Activated CD4-positive, alpha-beta T cell treated with anti-CD3 and anti-CD28 coated beads, Interleukin-2, amount 10 ng/mL, durations not matched to agents 24 days and 14 days (primary cell): ENCODE measurements at regions of chr20 and their contacts with region 1.

Region 1: DNA sequence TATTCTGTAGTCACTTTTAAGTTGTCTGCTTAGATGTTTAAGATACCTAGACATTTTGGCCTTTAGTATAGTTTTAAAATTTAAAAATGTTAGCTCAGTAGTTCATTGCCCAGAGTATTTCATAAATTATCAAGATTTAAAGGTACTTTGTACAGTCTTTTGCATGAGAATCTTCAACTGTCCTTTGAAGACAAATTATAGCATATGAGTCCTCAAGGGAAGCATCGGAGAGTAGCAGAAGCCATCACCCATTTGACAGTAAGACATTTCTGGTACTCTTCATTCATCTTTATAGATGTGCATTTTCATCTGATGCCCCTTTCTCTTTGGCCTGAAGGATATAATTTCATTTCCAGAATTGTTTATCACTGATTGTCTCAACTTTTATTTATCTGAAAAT is 89.5 kb downstream of the NCOA3 start:
- DNase-seq: no peak
- H3K4me3 Mint-ChIP-seq: no peak overlapping the region
- H3K27ac Mint-ChIP-seq: peak overlapping the region; percentile 25
- H3K4me1 Mint-ChIP-seq: peaks cover 24% of the 10 kb centered on the region
- H3K27me3 Mint-ChIP-seq: no peaks in the 10 kb centered on the region

Region 2: DNA sequence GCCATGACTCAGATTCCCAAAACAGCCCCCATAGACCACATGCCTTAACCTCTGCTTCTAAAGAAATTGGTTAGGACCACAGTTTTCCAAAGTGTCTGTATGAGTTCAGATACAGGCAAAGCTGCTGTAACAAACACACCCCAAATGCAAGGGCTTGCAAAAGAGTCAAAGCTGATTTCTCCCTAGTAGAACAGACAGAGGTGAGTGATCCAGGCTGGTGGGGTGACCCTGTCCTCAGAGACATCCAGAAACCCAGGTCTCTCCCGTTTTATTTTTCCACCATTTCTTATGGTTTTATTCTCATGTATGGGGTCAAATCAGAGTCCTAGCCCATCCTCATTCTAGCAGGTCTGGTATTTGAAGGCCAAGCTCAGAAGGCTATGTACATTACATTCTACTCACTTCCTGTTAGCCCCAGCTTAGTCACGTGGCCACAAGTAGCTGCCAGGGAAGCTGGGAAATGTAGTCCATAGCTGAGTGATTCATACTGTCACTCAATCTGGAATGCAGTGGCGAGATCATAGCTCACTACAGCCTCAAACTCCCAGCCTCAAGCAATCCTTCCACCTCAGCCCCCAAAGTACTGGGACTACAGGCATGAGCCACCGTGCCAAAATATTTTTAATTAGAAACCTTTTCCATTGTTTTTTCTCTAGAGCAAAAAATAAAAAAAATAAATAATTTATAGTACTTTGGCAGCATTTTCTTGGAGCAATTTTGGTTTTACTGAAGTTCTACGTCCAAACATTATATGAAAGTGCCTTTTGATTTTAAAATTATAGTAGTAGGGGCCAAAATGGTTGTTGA is 410.0 kb before region 1 on chr20:
- intact Hi-C with region 1: no loop called
- DNase-seq: no peak
- H3K4me3 Mint-ChIP-seq: no peak overlapping the region
- H3K27ac Mint-ChIP-seq: no peak overlapping the region
- H3K4me1 Mint-ChIP-seq: peaks cover 6% of the 10 kb centered on the region
- H3K27me3 Mint-ChIP-seq: no peaks in the 10 kb centered on the region

Region 3: DNA sequence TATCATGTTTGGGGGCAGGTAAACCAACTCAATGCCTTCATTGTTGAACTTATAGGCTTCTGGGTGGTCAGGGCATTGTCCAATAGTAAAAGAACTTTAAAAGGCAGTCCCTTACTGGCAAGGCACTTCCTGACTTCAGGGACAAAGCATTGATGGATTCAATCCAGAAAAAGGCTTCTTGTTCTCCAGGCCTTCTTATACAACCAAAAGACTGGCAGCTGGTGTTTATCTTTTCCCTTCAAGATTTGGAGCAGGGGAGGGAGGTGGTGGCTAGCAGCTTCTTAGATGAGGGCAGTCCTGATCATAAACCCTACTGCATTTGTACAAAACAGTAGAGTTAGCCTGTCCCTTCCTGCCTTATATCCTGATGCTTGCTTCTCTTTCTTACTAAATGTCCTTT is 32.1 kb before region 1 on chr20:
- intact Hi-C with region 1: loop called (anchors 5 kb)
- DNase-seq: no peak
- H3K4me3 Mint-ChIP-seq: no peak overlapping the region
- H3K27ac Mint-ChIP-seq: no peak overlapping the region
- H3K4me1 Mint-ChIP-seq: peaks cover 40% of the 10 kb centered on the region
- H3K27me3 Mint-ChIP-seq: no peaks in the 10 kb centered on the region